HepG2 (cell line): ENCODE measurements at regions of chr9 and their contacts with region 1.

Region 1: GRCh38 chr9:110058304-110058953 is 149.5 kb downstream of the C9orf152 start:
- DNase-seq: peak; percentile 53
- ATAC-seq: peak; percentile 90
- H3K4me3 ChIP-seq: no peak overlapping the region
- H3K27ac ChIP-seq: no peak overlapping the region
- H3K4me1 ChIP-seq: peaks cover 19% of the 10 kb centered on the region; the same call in 1 of the 2 replicates
- H3K27me3 ChIP-seq: no peaks in the 10 kb centered on the region
- CTCF ChIP-seq: peak; percentile 92
- EP300 ChIP-seq: no peak
- POLR2A ChIP-seq: no peak
- RAD21 ChIP-seq: peak; percentile 82

Region 2: GRCh38 chr9:109574068-109574882 is 484.2 kb before region 1 on chr9:
- CTCF ChIA-PET with region 1: no interaction called
- POLR2A ChIA-PET with region 1: no interaction called
- in situ Hi-C with region 1: loop called (anchors 10 kb)
- intact Hi-C with region 1: loop called (anchors 1 kb)
- DNase-seq: peak; percentile 36
- ATAC-seq: peak; percentile 66
- H3K4me3 ChIP-seq: no peak overlapping the region
- H3K27ac ChIP-seq: no peak overlapping the region
- H3K4me1 ChIP-seq: no peaks in the 10 kb centered on the region
- H3K27me3 ChIP-seq: no peaks in the 10 kb centered on the region
- CTCF ChIP-seq: peak; percentile 69
- EP300 ChIP-seq: no peak
- POLR2A ChIP-seq: no peak
- RAD21 ChIP-seq: peak; percentile 46; the same call in 1 of the 2 replicates

Region 3: GRCh38 chr9:109903515-109904138 is 154.8 kb before region 1 on chr9:
- CTCF ChIA-PET with region 1: interaction called, 31 read pairs
- POLR2A ChIA-PET with region 1: no interaction called
- in situ Hi-C with region 1: loop called (anchors 5 kb)
- intact Hi-C with region 1: loop called (anchors 1 kb)
- DNase-seq: peak; percentile 71
- ATAC-seq: peak; percentile 77
- H3K4me3 ChIP-seq: no peak overlapping the region
- H3K27ac ChIP-seq: no peak overlapping the region
- H3K4me1 ChIP-seq: peaks cover 47% of the 10 kb centered on the region
- H3K27me3 ChIP-seq: no peaks in the 10 kb centered on the region; a peak in 1 of 5 replicates
- CTCF ChIP-seq: peak; percentile 89
- EP300 ChIP-seq: no peak
- POLR2A ChIP-seq: no peak
- RAD21 ChIP-seq: peak; percentile 82

Region 4: GRCh38 chr9:110081395-110081794 is 23.0 kb after region 1 on chr9:
- CTCF ChIA-PET with region 1: no interaction called
- POLR2A ChIA-PET with region 1: no interaction called
- in situ Hi-C with region 1: no loop called
- intact Hi-C with region 1: no loop called
- DNase-seq: no peak
- ATAC-seq: no peak
- H3K4me3 ChIP-seq: no peak overlapping the region
- H3K27ac ChIP-seq: no peak overlapping the region
- H3K4me1 ChIP-seq: no peaks in the 10 kb centered on the region
- H3K27me3 ChIP-seq: no peaks in the 10 kb centered on the region
- CTCF ChIP-seq: no peak
- EP300 ChIP-seq: no peak
- POLR2A ChIP-seq: no peak
- RAD21 ChIP-seq: no peak

Region 5: DNA sequence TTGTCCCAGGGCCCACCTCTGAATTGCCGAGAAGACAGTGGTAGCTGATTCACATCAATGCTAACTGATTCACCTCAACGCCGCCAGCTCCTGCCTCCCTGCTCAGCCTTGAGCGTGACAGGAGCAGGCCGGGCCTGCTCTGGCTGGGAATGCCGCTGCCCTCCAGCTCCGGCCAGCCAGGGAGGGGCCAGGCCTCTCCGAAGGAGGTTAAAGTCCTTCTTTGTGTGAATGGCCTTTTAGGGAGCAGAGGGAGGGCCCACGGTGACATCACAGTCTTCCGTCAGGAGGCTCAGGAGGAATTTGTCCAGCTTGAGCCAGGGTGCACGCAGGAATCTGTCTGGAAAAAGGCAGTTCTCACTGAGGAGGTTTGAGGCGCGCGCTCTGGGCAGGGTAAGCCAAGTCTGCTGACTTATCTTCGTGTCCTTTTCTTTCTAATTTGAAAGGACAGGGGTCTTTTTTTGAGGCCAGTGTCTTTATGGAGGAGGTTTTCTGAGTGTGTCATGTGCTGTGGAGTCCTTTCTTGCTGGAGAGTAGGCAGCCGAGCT is 66.8 kb after region 1 on chr9:
- CTCF ChIA-PET with region 1: no interaction called
- POLR2A ChIA-PET with region 1: interaction called, 3 read pairs
- in situ Hi-C with region 1: no loop called
- intact Hi-C with region 1: loop called (anchors 2 kb)
- DNase-seq: peak; percentile 95
- ATAC-seq: peak; percentile 90
- H3K4me3 ChIP-seq: peak overlapping the region; percentile 58 to 82 (median 76)
- H3K27ac ChIP-seq: peak overlapping the region; percentile 74
- H3K4me1 ChIP-seq: peaks cover 59% of the 10 kb centered on the region
- H3K27me3 ChIP-seq: no peaks in the 10 kb centered on the region; a peak in 1 of 5 replicates
- CTCF ChIP-seq: no peak
- EP300 ChIP-seq: peak in 1 of 2 experiments; percentile 52; a peak in 1 of 4 replicates
- POLR2A ChIP-seq: peak; percentile 65 to 84
- RAD21 ChIP-seq: 0 out of 2 replicates have a peak, but pooled peaks have one; percentile 9